ENCODE measurements at regions of chr3 and their contacts with region 1.

Region 1: GRCh38 chr3:31531992-31532586 is 636 bp upstream of the STT3B start:
- DNase-seq: peak; percentile 97 to 99 (median 98)
- ATAC-seq: peak; percentile 83
- H3K4me3 ChIP-seq: peak overlapping the region; percentile 91
- H3K4me3 Mint-ChIP-seq: peak overlapping the region; percentile 97
- H3K27ac ChIP-seq: peak overlapping the region; percentile 97 to 98
- H3K27ac Mint-ChIP-seq: peak overlapping the region; percentile 96
- H3K4me1 ChIP-seq: peaks cover 14% of the 10 kb centered on the region
- H3K4me1 Mint-ChIP-seq: peaks cover 27% of the 10 kb centered on the region
- H3K27me3 ChIP-seq: no peaks in the 10 kb centered on the region
- H3K27me3 Mint-ChIP-seq: no peaks in the 10 kb centered on the region
- CTCF ChIP-seq: no peak

Region 2: GRCh38 chr3:31196881-31197364 is 335.2 kb before region 1 on chr3:
- CTCF ChIA-PET with region 1: no interaction called
- POLR2A ChIA-PET with region 1: no interaction called
- intact Hi-C with region 1: no loop called
- DNase-seq: no peak
- ATAC-seq: no peak
- H3K4me3 ChIP-seq: no peak overlapping the region
- H3K4me3 Mint-ChIP-seq: no peak overlapping the region
- H3K27ac ChIP-seq: no peak overlapping the region
- H3K27ac Mint-ChIP-seq: no peak overlapping the region
- H3K4me1 ChIP-seq: no peaks in the 10 kb centered on the region
- H3K4me1 Mint-ChIP-seq: peaks cover 5% of the 10 kb centered on the region
- H3K27me3 ChIP-seq: no peaks in the 10 kb centered on the region
- H3K27me3 Mint-ChIP-seq: no peaks in the 10 kb centered on the region
- CTCF ChIP-seq: no peak

Region 3: GRCh38 chr3:31219131-31219843 is 312.8 kb before region 1 on chr3:
- CTCF ChIA-PET with region 1: no interaction called
- POLR2A ChIA-PET with region 1: interaction called, 102 read pairs
- intact Hi-C with region 1: loop called (anchors 5 to 10 kb)
- DNase-seq: no peak
- ATAC-seq: no peak
- H3K4me3 ChIP-seq: no peak overlapping the region
- H3K4me3 Mint-ChIP-seq: peak overlapping the region; percentile 4
- H3K27ac ChIP-seq: no peak overlapping the region
- H3K27ac Mint-ChIP-seq: peak overlapping the region; percentile 18
- H3K4me1 ChIP-seq: peaks cover 60% of the 10 kb centered on the region
- H3K4me1 Mint-ChIP-seq: peaks cover 96% of the 10 kb centered on the region
- H3K27me3 ChIP-seq: no peaks in the 10 kb centered on the region
- H3K27me3 Mint-ChIP-seq: no peaks in the 10 kb centered on the region
- CTCF ChIP-seq: no peak

Region 4: DNA sequence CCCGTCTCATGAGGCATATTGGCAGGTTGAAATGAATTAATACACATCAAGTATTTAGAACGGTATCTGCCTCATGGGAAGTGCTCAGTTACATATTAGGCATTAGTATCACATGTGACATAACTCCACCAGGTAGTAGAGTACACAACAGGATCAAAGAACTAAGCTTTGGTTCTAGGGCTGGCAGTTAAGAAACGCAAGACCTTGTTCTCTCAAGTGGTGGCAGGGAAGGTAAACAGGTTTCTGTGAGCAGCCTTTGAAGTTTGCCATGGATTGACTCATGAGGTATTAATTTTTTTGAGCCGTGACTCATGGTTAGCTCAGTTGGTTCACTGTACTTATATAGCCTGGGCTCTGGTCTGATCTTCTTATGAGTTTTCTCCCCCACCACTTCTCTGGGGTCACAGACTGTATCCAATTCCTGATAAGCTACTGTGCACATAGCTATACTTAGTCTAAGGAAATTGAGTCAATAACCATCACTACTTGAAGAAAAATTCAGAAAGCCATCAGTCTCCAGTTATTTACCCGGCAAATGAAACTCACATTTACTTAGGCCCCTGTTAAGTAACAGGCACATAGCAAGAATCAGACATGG is 154.9 kb before region 1 on chr3:
- CTCF ChIA-PET with region 1: interaction called, 3 read pairs
- POLR2A ChIA-PET with region 1: interaction called, 11 read pairs
- intact Hi-C with region 1: no loop called
- DNase-seq: peak in 10 of 14 experiments; percentile 0 to 67 (median 15)
- ATAC-seq: peak; percentile 93
- H3K4me3 ChIP-seq: no peak overlapping the region
- H3K4me3 Mint-ChIP-seq: no peak overlapping the region
- H3K27ac ChIP-seq: no peak overlapping the region
- H3K27ac Mint-ChIP-seq: no peak overlapping the region
- H3K4me1 ChIP-seq: no peaks in the 10 kb centered on the region
- H3K4me1 Mint-ChIP-seq: peaks cover 18% of the 10 kb centered on the region
- H3K27me3 ChIP-seq: no peaks in the 10 kb centered on the region
- H3K27me3 Mint-ChIP-seq: no peaks in the 10 kb centered on the region
- CTCF ChIP-seq: no peak

Region 5: DNA sequence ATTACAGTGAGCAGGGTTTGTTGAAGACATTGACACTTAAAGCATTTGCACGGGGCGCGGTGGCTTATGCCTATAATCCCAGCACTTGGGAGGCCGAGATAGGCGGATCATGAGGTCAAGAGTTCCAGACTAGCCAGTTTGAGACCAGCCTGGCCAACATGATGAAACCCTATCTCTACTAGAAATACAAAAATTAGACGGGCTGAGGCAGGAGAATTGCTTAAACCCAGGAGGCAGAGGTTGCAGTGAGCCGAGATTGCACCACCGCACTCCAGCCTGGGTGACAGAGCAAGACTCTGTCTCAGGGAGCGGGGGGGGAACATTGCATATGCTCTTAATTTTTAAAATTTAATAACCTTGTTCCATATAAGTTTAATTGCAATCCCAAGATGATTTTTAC is 12.5 kb after region 1 on chr3:
- CTCF ChIA-PET with region 1: interaction called, 15 read pairs
- POLR2A ChIA-PET with region 1: interaction called, 52 read pairs
- intact Hi-C with region 1: loop called in 1 of 2 experiments (anchors 2 kb)
- DNase-seq: no peak
- ATAC-seq: no peak
- H3K4me3 ChIP-seq: no peak overlapping the region
- H3K4me3 Mint-ChIP-seq: peak overlapping the region; percentile 23
- H3K27ac ChIP-seq: no peak overlapping the region
- H3K27ac Mint-ChIP-seq: peak overlapping the region; percentile 55
- H3K4me1 ChIP-seq: peaks cover 21% of the 10 kb centered on the region
- H3K4me1 Mint-ChIP-seq: peaks cover 95% of the 10 kb centered on the region
- H3K27me3 ChIP-seq: no peaks in the 10 kb centered on the region
- H3K27me3 Mint-ChIP-seq: no peaks in the 10 kb centered on the region
- CTCF ChIP-seq: no peak

Region 6: GRCh38 chr3:31573036-31573779 is 41.1 kb after region 1 on chr3:
- CTCF ChIA-PET with region 1: interaction called, 3 read pairs
- POLR2A ChIA-PET with region 1: interaction called, 9 read pairs
- intact Hi-C with region 1: loop called (anchors 5 kb)
- DNase-seq: no peak
- ATAC-seq: no peak
- H3K4me3 ChIP-seq: no peak overlapping the region
- H3K4me3 Mint-ChIP-seq: no peak overlapping the region
- H3K27ac ChIP-seq: no peak overlapping the region
- H3K27ac Mint-ChIP-seq: no peak overlapping the region
- H3K4me1 ChIP-seq: peaks cover 20% of the 10 kb centered on the region
- H3K4me1 Mint-ChIP-seq: peaks cover 35% of the 10 kb centered on the region
- H3K27me3 ChIP-seq: no peaks in the 10 kb centered on the region
- H3K27me3 Mint-ChIP-seq: no peaks in the 10 kb centered on the region
- CTCF ChIP-seq: no peak

Region 7: DNA sequence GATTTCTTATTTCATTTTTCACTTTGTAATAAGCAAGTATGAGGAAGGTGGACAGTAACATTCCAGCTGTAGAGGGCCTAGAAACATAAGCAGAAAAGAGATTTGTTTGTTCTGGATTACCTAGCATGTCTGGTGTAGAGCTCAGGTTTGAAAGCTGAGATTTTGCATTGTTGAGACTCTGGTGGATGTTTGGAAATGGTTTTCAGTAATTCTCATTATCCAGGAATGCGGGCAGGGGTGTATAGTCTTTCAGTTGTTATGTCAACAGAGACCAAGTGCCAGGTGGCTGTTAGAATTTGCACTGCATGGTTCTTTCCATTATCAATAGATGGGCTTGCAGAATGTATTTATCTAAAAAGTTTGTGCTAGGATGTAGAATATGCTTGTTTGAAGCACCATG is 585.2 kb after region 1 on chr3:
- CTCF ChIA-PET with region 1: interaction called, 4 read pairs
- POLR2A ChIA-PET with region 1: interaction called, 6 read pairs
- intact Hi-C with region 1: loop called in 1 of 2 experiments (anchors 10 kb)
- DNase-seq: no peak
- ATAC-seq: no peak
- H3K4me3 ChIP-seq: no peak overlapping the region
- H3K4me3 Mint-ChIP-seq: no peak overlapping the region
- H3K27ac ChIP-seq: no peak overlapping the region
- H3K27ac Mint-ChIP-seq: no peak overlapping the region
- H3K4me1 ChIP-seq: peaks cover 19% of the 10 kb centered on the region
- H3K4me1 Mint-ChIP-seq: peaks cover 74% of the 10 kb centered on the region
- H3K27me3 ChIP-seq: no peaks in the 10 kb centered on the region
- H3K27me3 Mint-ChIP-seq: no peaks in the 10 kb centered on the region
- CTCF ChIP-seq: no peak

Measured in CD4-positive, alpha-beta T cell (primary cell).